ENCODE measurements at regions of chr4 and their contacts with region 1.

Region 1: DNA sequence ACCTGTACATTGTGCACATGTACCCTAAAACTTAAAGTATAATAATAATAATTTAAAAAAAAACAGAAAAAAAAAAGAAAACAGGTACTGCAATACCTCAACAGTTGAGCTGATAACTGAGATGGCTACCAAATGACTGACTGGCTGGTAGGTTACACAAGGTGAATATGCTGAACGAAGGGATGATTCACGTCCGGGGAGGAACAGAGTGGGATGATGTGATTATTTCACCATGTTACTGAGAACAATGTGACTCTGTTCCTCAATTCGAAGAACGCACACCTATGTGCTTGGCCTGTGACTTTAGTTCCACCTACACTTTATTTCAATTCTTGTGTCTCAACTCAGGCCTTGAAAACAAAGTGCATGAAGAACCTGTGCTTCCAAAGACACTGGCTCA is 111.7 kb downstream of the CXXC4 start:
- DNase-seq: peak; percentile 1
- ATAC-seq: no peak
- H3K4me3 ChIP-seq: no peak overlapping the region
- H3K27ac ChIP-seq: no peak overlapping the region
- H3K4me1 ChIP-seq: no peaks in the 10 kb centered on the region
- H3K27me3 ChIP-seq: no peaks in the 10 kb centered on the region
- CTCF ChIP-seq: no peak
- EP300 ChIP-seq: no peak
- POLR2A ChIP-seq: no peak
- RAD21 ChIP-seq: no peak

Region 2: GRCh38 chr4:104344342-104344980 is 38.5 kb before region 1 on chr4:
- CTCF ChIA-PET with region 1: no interaction called
- POLR2A ChIA-PET with region 1: no interaction called
- in situ Hi-C with region 1: no loop called
- intact Hi-C with region 1: no loop called
- DNase-seq: no peak
- ATAC-seq: no peak
- H3K4me3 ChIP-seq: no peak overlapping the region
- H3K27ac ChIP-seq: no peak overlapping the region
- H3K4me1 ChIP-seq: no peaks in the 10 kb centered on the region
- H3K27me3 ChIP-seq: no peaks in the 10 kb centered on the region
- CTCF ChIP-seq: no peak
- EP300 ChIP-seq: no peak
- POLR2A ChIP-seq: no peak
- RAD21 ChIP-seq: no peak

Region 3: DNA sequence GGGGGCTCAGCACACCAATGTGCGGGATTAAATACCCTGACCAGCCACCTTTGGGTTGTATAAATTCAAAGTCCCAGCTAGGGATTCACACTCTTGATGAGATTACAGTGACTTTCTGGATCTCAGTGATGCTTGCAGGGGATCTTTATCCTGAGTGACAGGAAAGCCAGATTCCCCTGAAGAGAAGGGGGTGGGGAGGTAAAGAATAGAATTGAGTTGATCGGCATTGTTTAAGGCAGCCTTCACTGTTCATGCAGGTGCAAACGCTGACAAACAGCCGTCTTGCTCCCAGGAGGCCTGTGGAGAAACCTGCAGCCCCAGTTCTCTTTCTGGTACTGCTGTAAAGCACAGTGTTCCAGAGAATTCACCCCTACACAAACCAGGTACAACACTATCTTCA is 92.7 kb after region 1 on chr4:
- CTCF ChIA-PET with region 1: no interaction called
- POLR2A ChIA-PET with region 1: no interaction called
- in situ Hi-C with region 1: no loop called
- intact Hi-C with region 1: no loop called
- DNase-seq: no peak
- ATAC-seq: no peak
- H3K4me3 ChIP-seq: no peak overlapping the region
- H3K27ac ChIP-seq: no peak overlapping the region
- H3K4me1 ChIP-seq: no peaks in the 10 kb centered on the region
- H3K27me3 ChIP-seq: no peaks in the 10 kb centered on the region; a peak in 1 of 5 replicates
- CTCF ChIP-seq: no peak
- EP300 ChIP-seq: no peak
- POLR2A ChIP-seq: no peak
- RAD21 ChIP-seq: no peak

Region 4: GRCh38 chr4:104490770-104491480 is 108.0 kb after region 1 on chr4:
- CTCF ChIA-PET with region 1: no interaction called
- POLR2A ChIA-PET with region 1: no interaction called
- in situ Hi-C with region 1: no loop called
- intact Hi-C with region 1: loop called (anchors 10 kb)
- DNase-seq: peak; percentile 17
- ATAC-seq: peak; percentile 56
- H3K4me3 ChIP-seq: peak overlapping the region; percentile 50 to 59 (median 50); a peak in 4 of 6 replicates
- H3K27ac ChIP-seq: no peak overlapping the region
- H3K4me1 ChIP-seq: peaks cover 21% of the 10 kb centered on the region
- H3K27me3 ChIP-seq: peaks cover 0 to 20% of the 10 kb centered on the region in 2 experiments; a peak in 2 of 5 replicates
- CTCF ChIP-seq: no peak
- EP300 ChIP-seq: no peak
- POLR2A ChIP-seq: no peak
- RAD21 ChIP-seq: no peak